Activated CD8-positive, alpha-beta T cell treated with anti-CD3 and anti-CD28 coated beads for 36 hours (primary cell): ENCODE measurements at regions of chr13 and their contacts with region 1.

Region 1: DNA sequence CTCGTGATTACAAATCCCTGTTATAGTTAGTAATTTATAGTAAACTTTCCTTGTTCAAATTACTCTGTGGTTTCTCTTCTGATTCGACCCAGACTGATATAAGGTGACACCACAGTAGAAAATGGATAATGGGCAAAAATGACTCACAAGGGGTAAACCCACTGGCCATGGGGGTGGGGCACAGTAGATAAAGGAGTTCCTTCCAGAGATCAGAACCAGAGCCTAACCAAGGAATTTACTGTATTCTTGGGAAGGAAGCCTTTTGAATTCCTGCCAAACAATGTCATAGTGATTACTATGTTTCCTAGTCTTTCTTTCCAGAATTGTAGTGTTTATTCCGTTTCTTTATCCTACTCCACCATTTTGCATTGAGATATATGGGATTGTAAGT is 21.9 kb downstream of the MIR17HG start:
- DNase-seq: peak; percentile 68
- ATAC-seq: peak; percentile 75
- H3K4me3 Mint-ChIP-seq: no peak overlapping the region
- H3K27ac Mint-ChIP-seq: peak overlapping the region; percentile 60
- H3K4me1 Mint-ChIP-seq: peaks cover 23% of the 10 kb centered on the region
- H3K27me3 Mint-ChIP-seq: no peaks in the 10 kb centered on the region
- CTCF ChIP-seq: no peak

Region 2: DNA sequence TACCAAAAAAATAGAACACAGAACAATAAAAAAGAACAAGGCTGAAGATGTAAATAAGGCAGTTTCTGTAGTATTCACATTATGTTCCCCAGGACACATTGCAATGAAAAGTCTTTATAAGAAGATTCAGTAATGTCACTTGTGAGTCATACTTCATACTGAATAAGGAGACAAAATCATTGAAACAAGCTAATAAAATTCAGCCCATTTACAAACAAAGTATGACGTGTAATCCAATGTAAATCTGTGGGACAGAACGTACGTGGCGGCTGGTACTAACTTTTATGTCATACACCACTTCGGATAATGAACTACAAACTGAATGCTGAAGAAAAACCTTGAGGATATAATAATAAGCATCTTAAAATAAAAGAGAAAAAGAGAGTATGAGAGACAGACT is 534.7 kb before region 1 on chr13:
- CTCF ChIA-PET with region 1: no interaction called
- POLR2A ChIA-PET with region 1: no interaction called
- intact Hi-C with region 1: no loop called
- DNase-seq: no peak
- ATAC-seq: no peak
- H3K4me3 Mint-ChIP-seq: no peak overlapping the region
- H3K27ac Mint-ChIP-seq: no peak overlapping the region
- H3K4me1 Mint-ChIP-seq: no peaks in the 10 kb centered on the region
- H3K27me3 Mint-ChIP-seq: no peaks in the 10 kb centered on the region
- CTCF ChIP-seq: no peak

Region 3: GRCh38 chr13:91278888-91279287 is 90.5 kb before region 1 on chr13:
- CTCF ChIA-PET with region 1: no interaction called
- POLR2A ChIA-PET with region 1: no interaction called
- intact Hi-C with region 1: no loop called
- DNase-seq: no peak
- ATAC-seq: no peak
- H3K4me3 Mint-ChIP-seq: no peak overlapping the region
- H3K27ac Mint-ChIP-seq: no peak overlapping the region
- H3K4me1 Mint-ChIP-seq: no peaks in the 10 kb centered on the region
- H3K27me3 Mint-ChIP-seq: peaks cover 2% of the 10 kb centered on the region
- CTCF ChIP-seq: no peak

Region 4: DNA sequence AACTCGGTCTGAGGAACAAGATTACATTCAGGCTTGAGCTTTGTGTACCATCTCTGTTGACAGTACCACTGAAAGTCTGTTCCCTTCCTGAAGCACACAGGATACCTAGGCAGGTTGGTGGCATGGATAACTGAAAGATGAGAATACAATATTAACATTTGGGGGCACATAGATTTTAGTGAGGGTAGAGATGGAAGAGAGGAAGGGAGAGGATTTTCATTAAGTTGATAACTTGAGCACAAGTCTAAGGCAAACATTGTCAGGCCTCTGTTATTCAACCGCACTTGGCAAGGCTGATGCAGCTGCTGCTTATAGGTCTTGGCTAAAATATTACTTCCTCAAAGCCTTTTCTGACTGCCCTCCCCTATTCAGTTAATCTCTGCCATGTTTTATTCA is 11.1 kb before region 1 on chr13:
- CTCF ChIA-PET with region 1: interaction called, 4 read pairs
- POLR2A ChIA-PET with region 1: interaction called, 25 read pairs
- intact Hi-C with region 1: no loop called
- DNase-seq: no peak
- ATAC-seq: no peak
- H3K4me3 Mint-ChIP-seq: no peak overlapping the region
- H3K27ac Mint-ChIP-seq: peak overlapping the region; percentile 48
- H3K4me1 Mint-ChIP-seq: peaks cover 37% of the 10 kb centered on the region
- H3K27me3 Mint-ChIP-seq: no peaks in the 10 kb centered on the region
- CTCF ChIP-seq: no peak

Region 5: DNA sequence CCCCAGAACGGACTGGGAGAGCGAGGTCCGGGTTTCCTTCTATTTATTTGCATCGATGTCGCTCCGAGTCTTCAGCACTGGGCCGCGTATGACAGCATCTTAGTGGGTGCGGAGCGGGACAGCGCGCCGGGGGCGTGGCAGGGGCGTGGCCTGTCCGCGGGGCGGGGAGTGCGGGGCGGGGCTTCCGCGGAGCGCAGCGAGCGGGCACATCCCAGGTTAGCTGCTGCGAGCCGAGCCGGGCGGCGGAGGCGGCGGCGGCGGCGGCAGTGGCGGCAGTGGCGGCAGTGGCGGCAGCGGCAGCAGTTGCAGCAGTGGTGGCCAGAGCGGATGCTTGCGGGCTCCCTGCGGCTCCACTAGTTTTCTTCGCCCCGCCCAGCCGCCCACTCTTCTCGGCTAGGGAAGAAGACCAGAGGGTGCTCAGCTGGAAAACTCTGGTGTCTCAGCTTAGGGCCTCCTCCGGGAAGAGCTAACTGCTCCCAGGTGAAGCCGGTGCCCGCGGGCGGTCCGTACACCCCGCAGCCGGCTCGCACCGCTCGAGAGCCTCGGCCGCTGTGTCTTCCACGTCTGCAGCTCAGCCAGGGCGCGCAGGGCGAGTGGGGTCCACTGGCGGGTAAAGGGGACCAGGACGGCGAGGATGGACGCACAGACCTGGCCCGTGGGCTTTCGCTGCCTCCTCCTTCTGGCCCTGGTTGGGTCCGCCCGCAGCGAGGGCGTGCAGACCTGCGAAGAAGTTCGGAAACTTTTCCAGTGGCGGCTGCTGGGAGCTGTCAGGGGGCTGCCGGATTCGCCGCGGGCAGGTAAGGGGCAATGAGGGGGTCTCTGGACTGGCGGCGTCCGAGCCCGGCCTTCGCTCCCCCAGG is 29.2 kb after region 1 on chr13 and contains the start of gene GPC5:
- CTCF ChIA-PET with region 1: interaction called, 3 read pairs
- POLR2A ChIA-PET with region 1: interaction called, 3 read pairs
- intact Hi-C with region 1: loop called (anchors 5 kb)
- DNase-seq: peak; percentile 81
- ATAC-seq: peak; percentile 99
- H3K4me3 Mint-ChIP-seq: peak within 1 kb of the TSS; percentile 67
- H3K27ac Mint-ChIP-seq: no peak within 1 kb of the TSS
- H3K4me1 Mint-ChIP-seq: peaks cover 15% of the 10 kb centered on the region
- H3K27me3 Mint-ChIP-seq: peaks cover 55% of the 10 kb centered on the region
- CTCF ChIP-seq: no peak
- total RNA-seq, gene GPC5: 0.13 to 0.14 TPM

Region 6: GRCh38 chr13:91576590-91576989 is 207.2 kb after region 1 on chr13:
- CTCF ChIA-PET with region 1: no interaction called
- POLR2A ChIA-PET with region 1: no interaction called
- intact Hi-C with region 1: no loop called
- DNase-seq: peak; percentile 8
- ATAC-seq: no peak
- H3K4me3 Mint-ChIP-seq: no peak overlapping the region
- H3K27ac Mint-ChIP-seq: no peak overlapping the region
- H3K4me1 Mint-ChIP-seq: no peaks in the 10 kb centered on the region
- H3K27me3 Mint-ChIP-seq: no peaks in the 10 kb centered on the region
- CTCF ChIP-seq: no peak